Activated CD4-positive, alpha-beta T cell treated with anti-CD3 and anti-CD28 coated beads for 36 hours (primary cell): ENCODE measurements at regions of chr7 and their contacts with region 1.

Region 1: GRCh38 chr7:92447345-92448204 is at the start of gene GATAD1:
- DNase-seq: peak; percentile 91
- ATAC-seq: peak; percentile 89
- H3K4me3 Mint-ChIP-seq: peak within 1 kb of the TSS; percentile 86
- H3K27ac Mint-ChIP-seq: peak within 1 kb of the TSS; percentile 84
- H3K4me1 Mint-ChIP-seq: peaks cover 15% of the 10 kb centered on the region
- H3K27me3 Mint-ChIP-seq: no peaks in the 10 kb centered on the region
- total RNA-seq, gene GATAD1: 18.4 to 19.0 TPM

Region 2: GRCh38 chr7:91082852-91083495 is 1364.6 kb before region 1 on chr7:
- CTCF ChIA-PET with region 1: no interaction called
- POLR2A ChIA-PET with region 1: no interaction called
- intact Hi-C with region 1: loop called in 1 of 2 experiments (anchors 2 kb)
- DNase-seq: no peak
- ATAC-seq: peak; percentile 10
- H3K4me3 Mint-ChIP-seq: peak overlapping the region; percentile 16
- H3K27ac Mint-ChIP-seq: no peak overlapping the region
- H3K4me1 Mint-ChIP-seq: peaks cover 32% of the 10 kb centered on the region
- H3K27me3 Mint-ChIP-seq: peaks cover 1% of the 10 kb centered on the region

Region 3: DNA sequence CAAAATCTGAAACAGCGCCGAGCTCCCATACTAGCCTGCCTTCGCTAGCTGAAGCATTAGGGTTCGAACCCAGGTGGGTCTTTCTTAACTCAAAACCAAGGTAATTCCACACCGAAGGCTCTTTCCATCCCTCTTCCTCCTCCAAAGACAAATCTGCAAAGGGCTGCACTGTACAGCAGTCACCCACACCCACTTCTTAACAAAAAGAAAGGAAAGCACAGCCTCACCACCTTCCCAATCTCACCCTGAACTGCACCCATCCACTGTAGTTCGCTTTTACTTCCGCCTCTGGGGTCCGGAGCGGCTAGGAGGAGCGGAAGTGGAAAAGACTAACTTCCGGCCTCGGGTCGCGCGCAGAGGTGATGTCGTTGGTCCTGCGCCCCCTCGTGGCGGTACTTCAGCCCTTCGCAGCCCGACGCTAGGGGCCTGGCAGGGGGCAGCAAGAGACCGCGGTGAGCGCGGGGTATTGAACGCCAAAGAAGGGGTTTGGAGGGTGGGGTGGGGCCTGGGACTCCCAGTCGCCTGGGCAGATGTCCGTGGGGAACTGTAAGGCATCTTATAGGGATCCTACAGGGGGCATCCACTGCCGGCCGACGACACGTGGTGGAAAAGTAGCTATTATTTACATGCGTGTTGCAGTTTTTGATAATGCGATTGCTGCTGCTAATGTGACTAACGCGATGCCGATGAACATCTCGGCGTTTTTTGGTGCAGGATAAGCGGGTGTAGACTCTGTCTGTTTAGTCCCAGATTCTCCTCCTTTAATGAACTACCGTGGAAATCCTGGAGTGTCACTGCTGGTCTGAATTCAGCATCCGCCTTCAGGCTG is 566.9 kb before region 1 on chr7 and contains the start of gene MTERF1:
- CTCF ChIA-PET with region 1: interaction called, 5 read pairs
- POLR2A ChIA-PET with region 1: interaction called, 7 read pairs
- intact Hi-C with region 1: loop called (anchors 1 to 2 kb)
- DNase-seq: peak; percentile 97
- ATAC-seq: peak; percentile 98
- H3K4me3 Mint-ChIP-seq: peak within 1 kb of the TSS; percentile 92
- H3K27ac Mint-ChIP-seq: peak within 1 kb of the TSS; percentile 94
- H3K4me1 Mint-ChIP-seq: peaks cover 29% of the 10 kb centered on the region
- H3K27me3 Mint-ChIP-seq: no peaks in the 10 kb centered on the region
- total RNA-seq, gene MTERF1: 16.7 to 16.9 TPM

Region 4: DNA sequence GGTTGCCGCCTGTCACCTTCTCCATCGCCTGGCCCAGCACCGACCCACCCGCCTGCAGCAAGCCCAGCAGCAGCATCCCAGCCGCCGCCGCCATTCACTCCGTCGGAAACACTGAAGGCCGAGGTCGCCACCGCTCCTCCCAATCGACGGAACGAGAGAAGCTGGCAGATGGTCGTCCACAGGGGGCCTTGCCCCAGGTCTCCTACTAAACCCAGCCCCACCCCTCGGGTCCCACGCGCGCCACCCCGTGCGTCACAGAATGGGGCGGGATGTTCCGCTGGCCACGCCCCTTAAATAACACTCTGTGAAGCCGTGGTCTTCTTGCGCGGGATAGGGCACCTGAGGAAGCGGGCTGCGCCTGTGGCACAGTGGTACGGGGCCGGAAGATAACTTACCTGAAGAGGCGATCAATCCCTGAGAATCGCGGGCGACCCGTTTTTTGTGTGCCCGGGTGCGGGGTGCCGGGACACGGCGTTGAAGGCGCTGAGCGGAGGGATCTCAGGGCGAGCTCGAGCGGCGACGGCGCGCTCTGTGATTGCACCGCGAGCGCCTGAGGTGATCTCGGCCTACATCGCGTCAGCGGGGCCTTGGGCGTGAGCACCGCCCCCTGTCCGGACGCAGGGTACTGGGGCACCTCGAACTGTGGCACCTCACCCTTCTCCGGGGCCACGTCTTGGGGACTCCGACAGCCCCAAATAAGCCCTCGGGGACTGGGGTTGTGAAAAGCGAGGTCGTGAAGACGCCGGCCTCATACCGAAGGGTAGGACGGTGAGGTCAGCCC is 313.1 kb before region 1 on chr7 and contains the start of gene CYP51A1:
- CTCF ChIA-PET with region 1: interaction called, 13 read pairs
- POLR2A ChIA-PET with region 1: interaction called, 6 read pairs
- intact Hi-C with region 1: loop called (anchors 1 kb)
- DNase-seq: peak; percentile 94
- ATAC-seq: peak; percentile 92
- H3K4me3 Mint-ChIP-seq: peak within 1 kb of the TSS; percentile 98
- H3K27ac Mint-ChIP-seq: peak within 1 kb of the TSS; percentile 99
- H3K4me1 Mint-ChIP-seq: peaks cover 20% of the 10 kb centered on the region
- H3K27me3 Mint-ChIP-seq: no peaks in the 10 kb centered on the region
- total RNA-seq, gene CYP51A1: 57.8 to 63.3 TPM

Region 5: DNA sequence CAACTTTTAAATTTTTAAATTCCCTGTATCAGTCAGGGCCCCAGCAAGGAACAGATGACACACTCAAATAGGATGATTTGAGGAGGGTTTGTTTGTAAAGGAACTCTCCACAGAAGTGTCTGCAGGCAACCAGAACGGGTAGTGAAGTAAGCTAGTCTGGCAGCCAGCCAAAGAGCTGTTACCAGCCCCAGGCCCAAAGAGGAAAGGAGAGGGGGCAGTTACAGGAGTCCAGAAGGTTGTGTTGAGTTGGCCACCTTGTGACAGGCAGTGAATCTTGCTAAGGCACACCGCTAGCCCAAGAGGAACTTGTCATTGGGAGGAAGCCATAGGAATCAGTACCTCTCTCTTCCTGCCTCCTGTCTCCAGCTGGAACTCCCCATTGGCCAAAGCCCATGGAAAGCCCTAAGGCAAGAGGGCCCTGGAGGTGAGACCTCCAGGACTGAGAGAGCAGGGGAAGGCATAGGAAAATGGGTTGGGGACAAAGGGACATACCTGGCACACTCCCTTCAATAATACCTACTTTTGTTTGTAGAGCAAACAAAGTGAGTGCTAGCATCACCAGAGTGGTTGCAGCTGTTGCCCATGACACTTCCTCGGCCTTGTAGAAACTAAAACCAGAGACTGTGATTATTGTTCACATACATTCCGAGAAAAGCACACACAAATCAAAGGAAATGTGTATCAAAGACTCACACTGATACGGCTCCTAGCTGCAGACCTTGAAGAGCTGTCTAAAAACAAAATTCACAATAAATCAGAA is 25.7 kb before region 1 on chr7:
- CTCF ChIA-PET with region 1: interaction called, 93 read pairs
- POLR2A ChIA-PET with region 1: interaction called, 6 read pairs
- intact Hi-C with region 1: loop called (anchors 1 kb)
- DNase-seq: no peak
- ATAC-seq: no peak
- H3K4me3 Mint-ChIP-seq: no peak overlapping the region
- H3K27ac Mint-ChIP-seq: no peak overlapping the region
- H3K4me1 Mint-ChIP-seq: peaks cover 10% of the 10 kb centered on the region
- H3K27me3 Mint-ChIP-seq: peaks cover 18% of the 10 kb centered on the region

Region 6: GRCh38 chr7:92595281-92595680 is 147.7 kb after region 1 on chr7:
- CTCF ChIA-PET with region 1: no interaction called
- POLR2A ChIA-PET with region 1: no interaction called
- intact Hi-C with region 1: loop called in 1 of 2 experiments (anchors 1 kb)
- DNase-seq: no peak
- ATAC-seq: no peak
- H3K4me3 Mint-ChIP-seq: no peak overlapping the region
- H3K27ac Mint-ChIP-seq: no peak overlapping the region
- H3K4me1 Mint-ChIP-seq: peaks cover 7% of the 10 kb centered on the region
- H3K27me3 Mint-ChIP-seq: peaks cover 3% of the 10 kb centered on the region

Region 7: DNA sequence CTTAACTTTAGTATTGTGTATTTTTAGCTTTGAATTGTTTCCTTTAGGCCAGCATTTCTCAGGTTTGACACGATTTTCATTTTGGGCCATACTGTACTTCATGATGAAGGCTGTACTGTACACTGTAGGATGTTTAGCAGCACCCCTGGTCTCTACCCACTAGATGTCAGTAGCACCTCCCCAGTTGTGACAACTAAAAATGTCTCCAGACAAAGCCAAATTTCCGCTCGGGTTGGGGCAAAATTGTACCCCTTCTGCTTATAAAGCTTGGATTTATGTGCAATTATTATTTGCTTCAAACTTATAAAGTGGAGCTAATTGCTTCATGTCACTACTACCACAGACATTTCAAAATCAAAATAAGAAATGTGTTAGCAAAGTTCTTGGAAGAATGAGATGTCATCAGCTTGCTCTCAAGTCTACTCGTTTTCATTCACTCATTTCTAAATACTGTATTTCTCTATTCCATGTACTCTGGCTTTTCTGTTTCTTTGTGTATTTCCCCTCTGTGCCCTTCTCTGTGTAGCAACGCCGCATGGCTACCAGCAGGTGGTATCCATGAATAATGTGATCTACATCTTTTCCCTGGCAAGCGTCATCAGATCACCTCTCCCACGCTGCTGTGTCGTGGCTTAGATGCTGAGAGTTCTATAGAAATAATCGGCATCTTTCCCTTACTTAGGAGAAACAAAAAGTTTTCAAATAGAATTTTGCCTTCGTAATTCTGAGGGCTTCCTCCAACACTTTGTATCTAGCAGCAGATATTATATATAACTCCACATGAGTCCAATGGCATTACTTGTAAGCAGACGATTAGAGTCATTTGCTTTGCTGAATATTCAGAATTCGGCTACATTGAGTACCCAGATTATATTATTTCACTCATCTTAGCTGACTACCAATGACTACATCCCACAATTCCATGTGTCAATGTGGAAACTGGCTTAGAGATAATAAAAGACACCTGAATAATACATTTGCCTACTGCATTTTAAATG is 1174.8 kb after region 1 on chr7:
- CTCF ChIA-PET with region 1: no interaction called
- POLR2A ChIA-PET with region 1: no interaction called
- intact Hi-C with region 1: no loop called
- DNase-seq: no peak
- ATAC-seq: no peak
- H3K4me3 Mint-ChIP-seq: no peak overlapping the region
- H3K27ac Mint-ChIP-seq: no peak overlapping the region
- H3K4me1 Mint-ChIP-seq: no peaks in the 10 kb centered on the region
- H3K27me3 Mint-ChIP-seq: no peaks in the 10 kb centered on the region